ENCODE measurements at regions of chr14 and their contacts with region 1.

Region 1: GRCh38 chr14:54773171-54773975 is 129.3 kb downstream of the GCH1 start:
- DNase-seq: peak; percentile 78 to 98
- H3K4me3 ChIP-seq: peak overlapping the region in 1 of 2 donors; percentile 33
- H3K27ac ChIP-seq: peak overlapping the region; percentile 96 to 97
- H3K4me1 ChIP-seq: peaks cover 27 to 62% of the 10 kb centered on the region in 2 donors
- H3K27me3 ChIP-seq: no peaks in the 10 kb centered on the region
- CTCF ChIP-seq: peak; percentile 70 to 91 (median 72)

Region 2: DNA sequence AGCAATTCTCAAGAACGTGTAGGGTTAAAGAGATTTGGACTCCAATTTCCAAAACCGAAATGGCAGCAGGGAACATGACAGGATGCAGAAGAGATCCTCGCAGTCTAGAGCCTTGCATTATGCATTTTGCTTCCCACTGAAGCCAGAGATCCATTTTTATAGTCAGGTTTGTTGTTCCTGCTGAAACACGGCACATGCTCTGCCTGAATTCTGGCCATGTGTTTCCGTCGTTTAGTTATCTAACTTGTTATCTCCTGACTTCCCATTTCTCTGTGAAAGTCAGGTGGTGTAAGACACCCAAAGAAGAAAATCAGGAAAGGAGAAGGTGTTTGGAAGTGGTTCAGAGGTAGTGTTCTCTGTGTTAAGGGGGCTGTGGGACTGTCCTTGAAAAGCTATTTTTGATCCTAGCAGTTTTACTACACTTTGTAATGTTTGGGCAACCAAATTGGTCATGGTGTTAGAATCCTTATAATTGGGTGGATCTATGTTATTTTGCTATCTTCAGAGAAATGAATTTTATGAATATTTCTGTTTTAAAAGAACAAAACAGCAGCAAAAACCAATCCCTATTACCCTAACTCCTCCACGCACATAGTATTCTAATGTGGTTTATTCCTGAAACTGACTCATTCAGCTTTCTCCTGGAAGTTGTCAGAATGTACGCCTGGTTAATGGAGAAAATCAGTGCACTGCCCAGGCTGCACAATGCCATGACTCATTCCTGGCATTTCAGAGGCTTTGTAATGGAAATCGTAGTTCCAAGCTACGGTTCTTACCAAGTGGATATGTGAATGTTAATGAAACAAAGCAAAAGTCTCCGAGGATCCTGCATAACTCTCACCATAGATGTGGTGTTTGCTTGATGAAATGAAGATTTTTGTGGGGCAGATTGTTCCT is 96.3 kb before region 1 on chr14:
- intact Hi-C with region 1: loop called (anchors 2 kb)
- DNase-seq: peak; percentile 37 to 87
- H3K4me3 ChIP-seq: peak overlapping the region in 1 of 2 donors; percentile 38
- H3K27ac ChIP-seq: peak overlapping the region; percentile 87 to 94
- H3K4me1 ChIP-seq: peaks cover 16 to 83% of the 10 kb centered on the region in 2 donors
- H3K27me3 ChIP-seq: no peaks in the 10 kb centered on the region
- CTCF ChIP-seq: no peak

Region 3: DNA sequence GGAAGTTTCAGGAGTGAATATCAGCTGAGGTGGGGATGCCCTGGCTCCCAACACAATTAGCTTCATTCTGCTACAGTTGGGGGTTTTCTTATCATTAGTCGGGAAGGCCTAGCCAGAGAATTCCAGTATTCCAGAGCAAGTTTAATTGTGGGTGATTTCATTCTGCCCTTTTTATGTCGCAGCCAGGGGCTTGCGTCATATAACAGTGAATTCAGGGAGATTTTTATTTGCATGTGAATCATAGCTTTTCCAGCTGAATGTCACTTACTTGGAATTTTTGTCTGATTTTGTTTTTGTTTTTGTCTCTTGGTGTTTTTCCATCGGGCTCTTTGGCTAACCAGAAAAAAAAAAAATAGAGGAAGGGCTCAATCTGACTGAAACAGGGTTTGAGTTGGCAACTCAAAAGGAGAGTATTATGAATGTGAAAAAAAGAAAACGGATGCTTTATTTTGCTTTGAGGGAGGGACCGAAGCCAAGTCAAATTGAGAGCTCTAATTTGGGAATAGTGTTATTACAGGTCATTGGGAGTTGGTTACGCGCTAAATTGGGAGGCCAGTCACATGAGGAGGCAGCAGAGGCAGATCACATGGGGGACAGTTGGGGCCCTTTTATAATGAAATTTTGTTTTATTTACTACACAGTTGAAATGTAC is 87.0 kb before region 1 on chr14:
- intact Hi-C with region 1: loop called (anchors 1 kb)
- DNase-seq: peak in 1 of 2 donors; percentile 92
- H3K4me3 ChIP-seq: peak overlapping the region in 1 of 2 donors; percentile 2
- H3K27ac ChIP-seq: peak overlapping the region; percentile 96 to 97
- H3K4me1 ChIP-seq: peaks cover 15 to 85% of the 10 kb centered on the region in 2 donors
- H3K27me3 ChIP-seq: no peaks in the 10 kb centered on the region
- CTCF ChIP-seq: no peak

Region 4: GRCh38 chr14:54735424-54735823 is 37.9 kb before region 1 on chr14:
- intact Hi-C with region 1: loop called (anchors 2 kb)
- DNase-seq: peak in 1 of 2 donors; percentile 73
- H3K4me3 ChIP-seq: no peak overlapping the region
- H3K27ac ChIP-seq: peak overlapping the region; percentile 41 to 72
- H3K4me1 ChIP-seq: peaks cover 2 to 43% of the 10 kb centered on the region in 2 donors
- H3K27me3 ChIP-seq: no peaks in the 10 kb centered on the region
- CTCF ChIP-seq: no peak

Region 5: DNA sequence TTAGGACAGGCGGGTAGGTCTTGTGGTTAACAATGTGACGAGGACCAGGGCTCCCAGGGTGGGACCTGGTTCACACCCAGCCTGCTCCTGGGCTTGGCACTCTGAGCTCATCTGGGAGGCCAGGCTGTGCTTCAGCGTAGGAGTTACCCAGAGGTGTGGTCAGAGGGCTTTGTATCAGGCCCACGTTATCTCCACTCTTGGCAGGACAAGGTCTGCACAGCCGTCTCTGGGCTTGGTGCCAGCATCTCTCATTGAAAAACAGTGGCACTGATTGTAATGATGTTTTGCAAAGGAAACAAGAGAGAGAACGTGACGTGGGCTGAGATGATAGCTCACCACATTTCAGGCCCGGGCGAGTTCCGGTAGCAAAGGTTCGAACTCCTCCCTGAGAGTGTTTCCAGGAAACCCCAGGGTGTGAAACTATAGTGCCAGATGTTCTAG is 1033.7 kb after region 1 on chr14:
- intact Hi-C with region 1: no loop called
- DNase-seq: peak; percentile 58 to 84
- H3K4me3 ChIP-seq: no peak overlapping the region
- H3K27ac ChIP-seq: no peak overlapping the region
- H3K4me1 ChIP-seq: no peaks in the 10 kb centered on the region
- H3K27me3 ChIP-seq: no peaks in the 10 kb centered on the region
- CTCF ChIP-seq: no peak

Measured in ascending aorta (tissue), 2 donors.